ENCODE measurements at regions of chr1 and their contacts with region 1.

Region 1: DNA sequence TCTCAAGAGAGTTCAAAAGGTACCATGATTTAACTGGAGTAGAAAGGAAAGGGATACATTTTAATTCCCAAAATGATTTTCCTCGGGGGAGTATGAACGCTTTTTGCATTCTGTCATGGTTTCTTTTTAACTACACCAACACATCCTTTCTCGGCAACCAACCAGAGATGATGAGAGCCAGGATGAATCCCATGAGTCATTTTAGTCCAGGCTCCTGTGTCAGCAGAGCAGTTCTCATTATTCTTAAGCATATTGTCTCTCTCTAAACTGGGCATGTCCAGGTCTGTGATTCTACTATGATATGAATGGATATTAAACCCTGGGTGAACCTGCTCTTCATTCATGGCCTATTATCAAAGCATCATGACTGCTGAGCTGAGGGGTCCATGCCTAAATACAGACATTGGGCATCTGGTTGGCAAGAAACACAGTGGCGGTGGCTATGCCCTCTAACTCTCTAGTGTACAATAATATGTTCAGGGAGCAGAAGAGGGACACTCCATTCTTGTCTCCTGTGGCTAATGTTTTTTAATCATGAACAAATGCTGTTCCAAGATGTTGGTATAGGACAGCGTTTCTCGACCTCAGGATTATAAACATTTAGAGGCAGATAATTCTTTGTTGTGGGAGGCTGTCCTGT is 124.3 kb upstream of the ESRRG start:
- DNase-seq: no peak
- H3K4me3 ChIP-seq: no peak overlapping the region
- H3K27ac ChIP-seq: no peak overlapping the region
- H3K4me1 ChIP-seq: no peaks in the 10 kb centered on the region
- H3K27me3 ChIP-seq: no peaks in the 10 kb centered on the region
- CTCF ChIP-seq: no peak
- EP300 ChIP-seq: no peak
- POLR2A ChIP-seq: no peak

Region 2: GRCh38 chr1:215899901-215900300 is 947.6 kb before region 1 on chr1:
- intact Hi-C with region 1: loop called in 1 of 4 experiments (anchors 5 kb)
- DNase-seq: no peak
- H3K4me3 ChIP-seq: no peak overlapping the region
- H3K27ac ChIP-seq: no peak overlapping the region
- H3K4me1 ChIP-seq: no peaks in the 10 kb centered on the region
- H3K27me3 ChIP-seq: no peaks in the 10 kb centered on the region
- CTCF ChIP-seq: no peak
- EP300 ChIP-seq: no peak
- POLR2A ChIP-seq: no peak

Region 3: GRCh38 chr1:216997069-216997468 is 149.6 kb after region 1 on chr1:
- intact Hi-C with region 1: no loop called
- DNase-seq: no peak
- H3K4me3 ChIP-seq: no peak overlapping the region
- H3K27ac ChIP-seq: no peak overlapping the region
- H3K4me1 ChIP-seq: no peaks in the 10 kb centered on the region
- H3K27me3 ChIP-seq: no peaks in the 10 kb centered on the region
- CTCF ChIP-seq: no peak
- EP300 ChIP-seq: no peak
- POLR2A ChIP-seq: no peak

Measured in ovary (tissue), 10 donors.